ENCODE measurements at regions of chr7 and their contacts with region 1.

Region 1: GRCh38 chr7:45136106-45137060 is 21.2 kb upstream of the RAMP3 start:
- DNase-seq: peak in 1 of 2 donors; percentile 44
- ATAC-seq: peak; percentile 80 to 95 (median 86)
- H3K4me3 ChIP-seq: no peak overlapping the region
- H3K27ac ChIP-seq: no peak overlapping the region
- H3K4me1 ChIP-seq: no peaks in the 10 kb centered on the region
- H3K27me3 ChIP-seq: no peaks in the 10 kb centered on the region
- CTCF ChIP-seq: peak; percentile 86

Region 2: DNA sequence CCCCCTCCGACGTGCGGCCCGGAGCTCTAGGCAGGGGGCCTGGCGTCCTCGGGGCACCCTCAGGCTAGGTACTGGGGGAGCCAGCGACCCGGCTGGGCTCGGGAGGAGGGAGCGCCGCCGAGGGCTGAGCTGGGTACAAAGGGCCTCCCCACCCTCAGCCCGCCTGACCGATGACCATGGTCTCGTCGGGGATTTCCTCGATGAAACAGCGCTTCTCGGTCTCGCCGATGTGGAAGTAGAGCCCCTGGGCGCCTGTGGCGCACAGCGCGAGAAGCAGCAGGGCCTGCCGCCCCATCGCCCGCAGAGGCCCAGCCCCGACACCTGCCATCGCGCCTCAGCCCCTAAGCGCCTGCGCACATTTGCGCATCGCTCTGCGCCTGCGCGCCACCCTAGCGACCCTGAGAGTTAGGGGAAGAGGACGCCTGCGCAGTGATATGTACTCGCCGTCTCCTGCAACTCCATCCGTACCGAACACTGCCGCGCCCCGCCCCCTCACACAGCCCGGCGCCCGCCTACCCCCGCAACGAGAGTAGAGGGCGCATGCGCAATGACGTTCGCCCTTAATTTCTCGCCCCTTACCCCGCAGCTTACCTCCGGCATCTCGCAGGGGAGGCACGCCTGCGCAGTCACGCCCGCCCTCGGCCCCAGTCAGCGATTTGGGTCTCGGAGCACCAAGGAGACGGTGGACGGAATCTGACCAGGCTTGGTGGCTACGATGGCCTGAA is 554.3 kb before region 1 on chr7 and contains the start of gene TMED4:
- intact Hi-C with region 1: loop called in 1 of 2 experiments (anchors 10 kb)
- DNase-seq: peak; percentile 100
- ATAC-seq: peak; percentile 94 to 98 (median 96)
- H3K4me3 ChIP-seq: peak within 1 kb of the TSS; percentile 96
- H3K27ac ChIP-seq: peak within 1 kb of the TSS; percentile 94
- H3K4me1 ChIP-seq: peaks cover 22% of the 10 kb centered on the region
- H3K27me3 ChIP-seq: no peaks in the 10 kb centered on the region
- CTCF ChIP-seq: no peak
- total RNA-seq, gene TMED4: 43.1 to 64.4 (median 46.0) TPM

Region 3: DNA sequence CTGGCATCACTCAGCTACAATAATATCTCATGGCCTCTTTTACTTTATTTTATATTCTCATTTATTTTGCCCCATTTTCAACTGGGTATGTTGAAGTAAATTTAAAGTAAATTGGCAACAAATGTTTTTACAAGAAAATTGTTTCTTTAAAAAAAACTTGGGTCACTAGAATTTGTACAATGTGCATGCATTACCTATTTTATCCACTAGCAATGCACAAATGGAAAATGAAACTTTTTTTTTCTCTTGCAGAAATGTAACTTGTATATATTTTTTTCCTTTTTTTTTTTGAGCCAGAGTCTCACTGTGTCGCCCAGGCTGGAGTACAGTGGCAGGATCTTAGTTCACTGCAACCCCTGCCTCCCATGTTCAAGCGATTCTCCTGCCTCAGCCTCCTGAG is 278.2 kb before region 1 on chr7:
- intact Hi-C with region 1: loop called (anchors 2 to 5 kb)
- DNase-seq: no peak
- ATAC-seq: no peak
- H3K4me3 ChIP-seq: no peak overlapping the region
- H3K27ac ChIP-seq: no peak overlapping the region
- H3K4me1 ChIP-seq: no peaks in the 10 kb centered on the region
- H3K27me3 ChIP-seq: no peaks in the 10 kb centered on the region
- CTCF ChIP-seq: peak; percentile 12

Region 4: DNA sequence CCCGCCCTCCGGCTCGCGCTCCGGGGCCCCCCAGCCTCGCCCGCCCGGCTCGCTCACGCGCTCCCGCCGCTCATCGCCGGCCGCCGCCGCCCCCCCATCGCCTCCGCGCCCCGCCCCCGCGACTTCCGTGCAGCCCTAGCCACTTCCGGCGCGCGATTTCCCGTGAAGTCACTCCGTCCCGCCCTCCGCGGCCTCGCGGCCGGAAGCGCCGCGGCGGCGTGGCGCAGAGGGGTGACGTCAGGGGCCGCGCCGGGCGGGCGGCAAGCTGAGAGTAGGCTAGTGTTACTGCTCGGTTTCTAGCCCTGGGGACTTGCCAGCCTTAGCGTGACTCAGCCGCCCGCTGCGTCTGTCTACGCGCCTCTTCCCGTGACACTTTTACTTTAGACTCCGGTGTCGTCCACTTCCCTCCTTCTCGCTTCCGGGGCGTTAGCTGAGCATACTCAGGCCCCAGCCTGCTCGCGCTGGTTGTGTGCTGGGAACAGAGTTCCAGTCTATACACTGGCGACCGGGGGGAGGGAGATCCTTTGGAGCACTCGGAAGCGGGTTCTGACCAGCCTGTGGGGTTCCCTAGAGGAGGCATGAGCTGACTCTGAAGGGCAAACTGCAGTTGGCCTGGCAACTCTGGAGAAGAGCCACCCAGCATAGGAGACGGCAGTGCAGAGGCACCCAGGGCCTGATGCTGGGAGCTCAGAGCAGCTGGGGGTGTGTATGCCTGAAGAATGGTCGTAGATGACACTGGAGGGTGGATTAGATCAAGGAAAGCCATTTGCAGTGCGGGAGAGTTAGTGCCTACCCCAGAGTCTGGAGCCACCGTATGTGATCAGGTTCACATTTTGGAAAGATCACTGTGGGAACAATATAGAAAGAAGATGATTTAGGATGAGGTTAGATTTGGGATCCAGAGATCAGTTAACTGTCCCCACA is 250.7 kb before region 1 on chr7 and contains the start of gene PURB:
- intact Hi-C with region 1: loop called in 1 of 2 experiments (anchors 10 kb)
- DNase-seq: peak; percentile 96 to 98
- ATAC-seq: peak; percentile 91 to 94 (median 92)
- H3K4me3 ChIP-seq: peak within 1 kb of the TSS; percentile 97
- H3K27ac ChIP-seq: peak within 1 kb of the TSS; percentile 99
- H3K4me1 ChIP-seq: peaks cover 42% of the 10 kb centered on the region
- H3K27me3 ChIP-seq: no peaks in the 10 kb centered on the region
- CTCF ChIP-seq: no peak
- total RNA-seq, gene PURB: 14.1 to 27.2 (median 21.8) TPM

Region 5: DNA sequence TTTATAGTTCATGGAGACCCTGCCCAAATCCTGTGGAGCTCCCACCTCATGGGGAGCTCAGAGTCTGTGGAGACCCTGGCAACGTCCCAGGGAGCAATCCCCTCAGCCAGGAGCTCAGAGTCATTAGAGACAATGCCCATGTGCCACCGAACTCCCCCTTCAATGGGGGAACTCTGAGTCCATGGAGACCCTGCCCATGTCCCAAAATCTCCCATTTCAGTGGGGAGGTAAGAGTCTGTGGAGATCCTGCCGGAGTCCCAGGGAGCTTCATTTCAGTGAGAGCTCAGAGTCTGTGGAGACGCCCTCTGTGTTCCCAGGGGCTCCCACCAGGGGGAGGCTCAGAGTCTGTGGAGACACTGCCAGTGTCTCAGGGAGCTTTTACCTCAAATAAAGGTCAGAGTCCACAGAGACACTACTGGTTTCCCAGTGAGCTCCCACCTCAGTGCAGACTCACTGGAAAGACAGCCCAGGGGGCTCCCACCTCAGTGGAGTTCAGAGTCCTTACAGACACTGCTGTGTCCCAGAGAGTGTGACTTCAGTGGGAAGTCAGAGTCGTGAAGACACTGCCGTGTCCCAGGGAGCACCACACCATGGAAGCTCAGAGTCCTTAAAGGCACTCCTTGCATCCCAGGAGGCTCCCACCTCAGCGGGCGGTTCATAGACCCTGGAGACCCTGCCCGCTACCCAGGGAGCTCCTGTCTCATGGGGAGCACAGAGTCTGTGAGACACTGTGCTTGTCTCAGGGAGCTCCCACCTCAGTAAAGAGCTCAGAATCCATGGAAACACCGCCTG is 162.6 kb before region 1 on chr7:
- intact Hi-C with region 1: loop called (anchors 1 to 5 kb)
- DNase-seq: no peak
- ATAC-seq: peak; percentile 64 to 87 (median 77)
- H3K4me3 ChIP-seq: no peak overlapping the region
- H3K27ac ChIP-seq: no peak overlapping the region
- H3K4me1 ChIP-seq: no peaks in the 10 kb centered on the region
- H3K27me3 ChIP-seq: no peaks in the 10 kb centered on the region
- CTCF ChIP-seq: peak; percentile 61

Region 6: DNA sequence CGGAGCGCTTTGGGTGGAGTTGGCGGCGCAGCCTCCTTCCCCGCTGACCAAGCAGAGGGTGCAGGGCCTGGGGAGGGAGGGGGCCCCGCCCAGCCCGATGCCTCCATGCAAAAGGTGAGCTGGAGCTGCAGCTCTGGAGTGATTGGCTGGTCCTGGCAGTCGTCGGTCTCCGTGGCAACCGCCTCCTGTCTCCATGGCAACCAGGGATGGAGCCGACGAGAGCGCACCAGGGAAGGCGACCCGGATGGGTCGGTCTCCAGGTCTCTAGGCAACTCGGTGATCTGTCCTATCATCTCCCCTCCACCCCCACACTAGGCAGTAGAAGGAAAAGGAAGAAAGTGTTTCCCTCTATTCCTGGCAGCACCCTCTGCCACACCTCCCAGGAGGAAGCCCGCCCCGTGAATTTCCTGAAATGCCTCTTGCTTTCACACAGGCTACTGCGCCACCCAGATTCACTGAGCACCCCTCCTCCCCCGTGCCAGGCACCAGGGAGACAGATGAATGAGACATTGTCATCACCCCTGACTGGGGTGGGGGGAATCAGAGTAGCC is 47.0 kb before region 1 on chr7:
- intact Hi-C with region 1: loop called in 1 of 2 experiments (anchors 5 kb)
- DNase-seq: peak; percentile 55 to 70
- ATAC-seq: peak in 3 of 4 donors; percentile 16 to 59 (median 50)
- H3K4me3 ChIP-seq: peak overlapping the region; percentile 76
- H3K27ac ChIP-seq: no peak overlapping the region
- H3K4me1 ChIP-seq: no peaks in the 10 kb centered on the region
- H3K27me3 ChIP-seq: peaks cover 0 to 9% (median 0%) of the 10 kb centered on the region in 3 donors
- CTCF ChIP-seq: no peak

Measured in psoas muscle (tissue), 8 donors.